PC-9 (cell line): ENCODE measurements at regions of chr1 and their contacts with region 1.

Region 1: DNA sequence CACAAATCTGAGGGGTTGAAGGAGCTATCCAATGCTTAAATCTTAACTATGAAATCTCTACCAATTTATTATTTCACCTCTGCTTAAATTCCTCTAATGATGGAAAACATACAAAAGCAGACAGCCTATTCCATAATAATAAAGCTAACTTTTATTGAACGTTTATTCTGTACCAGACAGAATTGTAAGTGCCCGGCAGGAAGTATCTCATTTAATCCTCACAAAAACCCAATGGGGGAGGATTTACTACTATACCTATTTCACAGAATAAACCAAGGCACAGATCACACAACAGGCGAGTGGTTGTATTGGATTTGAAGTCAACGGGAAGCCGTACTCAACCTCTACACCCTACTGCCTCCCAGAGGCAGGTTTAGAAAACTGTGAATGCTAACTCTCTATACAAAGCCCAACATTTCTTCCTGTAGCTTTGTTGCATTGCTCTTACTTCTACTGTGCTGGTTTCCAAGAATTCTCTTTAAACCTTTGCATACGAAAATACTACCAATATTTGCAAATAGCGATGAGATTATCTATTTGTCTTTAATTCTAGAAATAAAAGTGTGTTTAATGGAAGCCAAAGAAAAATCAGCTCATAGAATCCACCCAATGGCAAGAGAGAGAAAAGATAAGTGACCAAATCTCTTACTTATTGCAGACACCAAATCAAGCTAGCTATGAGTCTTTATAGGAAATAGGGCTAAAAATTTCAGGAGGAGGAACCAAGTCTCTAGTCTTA is 33.5 kb upstream of the C1orf53 start:
- DNase-seq: peak; percentile 1 to 38
- H3K4me3 ChIP-seq: no peak overlapping the region
- H3K27ac ChIP-seq: no peak overlapping the region
- H3K4me1 ChIP-seq: no peaks in the 10 kb centered on the region
- H3K27me3 ChIP-seq: no peaks in the 10 kb centered on the region
- CTCF ChIP-seq: peak; percentile 72

Region 2: GRCh38 chr1:197620714-197621163 is 248.2 kb before region 1 on chr1:
- CTCF ChIA-PET with region 1: interaction called, 3 read pairs
- POLR2A ChIA-PET with region 1: no interaction called
- intact Hi-C with region 1: loop called (anchors 2 kb)
- DNase-seq: peak in 1 of 2 experiments; percentile 36
- H3K4me3 ChIP-seq: no peak overlapping the region
- H3K27ac ChIP-seq: no peak overlapping the region
- H3K4me1 ChIP-seq: no peaks in the 10 kb centered on the region
- H3K27me3 ChIP-seq: no peaks in the 10 kb centered on the region
- CTCF ChIP-seq: no peak

Region 3: DNA sequence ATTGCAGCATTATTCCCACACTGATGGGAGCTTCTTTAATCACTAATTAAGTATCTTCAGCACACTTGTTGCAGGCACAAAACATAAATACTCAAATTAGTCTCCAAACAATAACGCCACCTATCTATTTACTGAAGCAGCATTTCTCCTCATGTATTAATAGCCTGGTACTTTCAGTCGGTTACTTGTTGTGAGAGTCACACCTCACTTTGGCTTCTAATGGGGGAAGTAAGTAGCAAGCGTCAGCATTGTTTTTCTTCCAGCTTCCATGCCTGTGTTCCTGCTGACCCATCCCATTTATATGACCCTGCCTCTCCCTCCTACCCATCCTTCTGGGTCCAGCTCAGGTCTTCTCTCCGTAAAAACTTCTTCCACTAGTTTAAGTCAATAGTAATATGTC is 61.7 kb before region 1 on chr1:
- CTCF ChIA-PET with region 1: no interaction called
- POLR2A ChIA-PET with region 1: no interaction called
- intact Hi-C with region 1: no loop called
- DNase-seq: no peak
- H3K4me3 ChIP-seq: no peak overlapping the region
- H3K27ac ChIP-seq: no peak overlapping the region
- H3K4me1 ChIP-seq: no peaks in the 10 kb centered on the region
- H3K27me3 ChIP-seq: peaks cover 4% of the 10 kb centered on the region; the same call in 1 of the 2 replicates
- CTCF ChIP-seq: no peak

Region 4: GRCh38 chr1:197890936-197891335 is 22.0 kb after region 1 on chr1:
- CTCF ChIA-PET with region 1: no interaction called
- POLR2A ChIA-PET with region 1: no interaction called
- intact Hi-C with region 1: no loop called
- DNase-seq: no peak
- H3K4me3 ChIP-seq: no peak overlapping the region
- H3K27ac ChIP-seq: no peak overlapping the region
- H3K4me1 ChIP-seq: no peaks in the 10 kb centered on the region
- H3K27me3 ChIP-seq: no peaks in the 10 kb centered on the region
- CTCF ChIP-seq: no peak